ENCODE measurements at regions of chr1 and their contacts with region 1.

Region 1: DNA sequence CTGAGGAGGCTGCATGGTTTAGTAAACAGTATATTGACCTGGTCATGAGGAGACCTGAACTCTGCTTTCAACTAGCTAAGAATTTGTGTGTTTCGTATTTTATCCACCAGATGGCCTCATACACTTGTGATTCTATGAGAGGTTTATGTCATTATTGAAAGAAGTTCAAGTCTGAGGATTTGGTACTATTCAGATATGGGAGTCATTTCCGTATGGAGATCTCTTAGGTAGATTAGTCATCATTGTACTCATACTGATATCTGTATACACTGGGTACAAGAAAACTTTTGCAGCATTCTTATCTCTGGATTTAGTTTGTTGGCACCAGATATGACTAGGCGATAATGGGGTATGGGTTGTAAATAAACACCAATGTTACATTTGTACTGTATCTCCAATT is 26.6 kb downstream of the ATF6 start:
- DNase-seq: no peak
- H3K4me3 Mint-ChIP-seq: no peak overlapping the region
- H3K27ac Mint-ChIP-seq: peak overlapping the region; percentile 2
- H3K4me1 Mint-ChIP-seq: peaks cover 31% of the 10 kb centered on the region
- H3K27me3 Mint-ChIP-seq: no peaks in the 10 kb centered on the region

Region 2: GRCh38 chr1:161905269-161905884 is 112.6 kb after region 1 on chr1:
- CTCF ChIA-PET with region 1: interaction called, 20 read pairs
- POLR2A ChIA-PET with region 1: no interaction called
- DNase-seq: no peak
- H3K4me3 Mint-ChIP-seq: no peak overlapping the region
- H3K27ac Mint-ChIP-seq: no peak overlapping the region
- H3K4me1 Mint-ChIP-seq: no peaks in the 10 kb centered on the region
- H3K27me3 Mint-ChIP-seq: no peaks in the 10 kb centered on the region

Region 3: GRCh38 chr1:162023547-162024501 is 231.1 kb after region 1 on chr1 and contains the start of gene OLFML2B:
- CTCF ChIA-PET with region 1: interaction called, 14 read pairs
- POLR2A ChIA-PET with region 1: no interaction called
- DNase-seq: peak; percentile 53
- H3K4me3 Mint-ChIP-seq: peak within 1 kb of the TSS; percentile 67
- H3K27ac Mint-ChIP-seq: no peak within 1 kb of the TSS
- H3K4me1 Mint-ChIP-seq: peaks cover 8% of the 10 kb centered on the region
- H3K27me3 Mint-ChIP-seq: peaks cover 48% of the 10 kb centered on the region
- total RNA-seq, gene OLFML2B: not detected